ENCODE measurements at regions of chr1 and their contacts with region 1.

Region 1: DNA sequence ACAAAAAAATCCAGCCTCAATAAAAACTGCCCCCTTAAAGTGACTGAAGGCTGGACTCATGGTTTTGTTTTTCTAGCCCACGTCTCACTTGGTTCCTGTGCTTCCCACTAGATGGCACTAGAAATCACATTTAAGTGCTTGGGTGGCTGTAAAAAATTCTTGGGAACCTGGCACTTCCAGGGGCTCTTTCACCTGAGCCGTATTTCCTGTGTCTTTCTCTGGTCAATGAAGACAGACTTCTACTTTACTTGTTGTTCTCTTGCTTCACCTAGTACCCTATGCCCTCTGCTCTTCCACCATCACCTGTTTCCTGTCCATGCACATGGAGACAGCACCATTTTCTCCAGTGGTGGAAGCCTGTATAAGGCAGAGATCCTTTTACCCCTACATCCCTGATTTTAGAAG is 20.0 kb downstream of the METTL13 start:
- DNase-seq: peak; percentile 14
- ATAC-seq: peak; percentile 55
- H3K4me3 Mint-ChIP-seq: no peak overlapping the region
- H3K27ac Mint-ChIP-seq: no peak overlapping the region
- H3K4me1 Mint-ChIP-seq: peaks cover 4% of the 10 kb centered on the region
- H3K27me3 Mint-ChIP-seq: no peaks in the 10 kb centered on the region
- CTCF ChIP-seq: peak; percentile 68

Region 2: DNA sequence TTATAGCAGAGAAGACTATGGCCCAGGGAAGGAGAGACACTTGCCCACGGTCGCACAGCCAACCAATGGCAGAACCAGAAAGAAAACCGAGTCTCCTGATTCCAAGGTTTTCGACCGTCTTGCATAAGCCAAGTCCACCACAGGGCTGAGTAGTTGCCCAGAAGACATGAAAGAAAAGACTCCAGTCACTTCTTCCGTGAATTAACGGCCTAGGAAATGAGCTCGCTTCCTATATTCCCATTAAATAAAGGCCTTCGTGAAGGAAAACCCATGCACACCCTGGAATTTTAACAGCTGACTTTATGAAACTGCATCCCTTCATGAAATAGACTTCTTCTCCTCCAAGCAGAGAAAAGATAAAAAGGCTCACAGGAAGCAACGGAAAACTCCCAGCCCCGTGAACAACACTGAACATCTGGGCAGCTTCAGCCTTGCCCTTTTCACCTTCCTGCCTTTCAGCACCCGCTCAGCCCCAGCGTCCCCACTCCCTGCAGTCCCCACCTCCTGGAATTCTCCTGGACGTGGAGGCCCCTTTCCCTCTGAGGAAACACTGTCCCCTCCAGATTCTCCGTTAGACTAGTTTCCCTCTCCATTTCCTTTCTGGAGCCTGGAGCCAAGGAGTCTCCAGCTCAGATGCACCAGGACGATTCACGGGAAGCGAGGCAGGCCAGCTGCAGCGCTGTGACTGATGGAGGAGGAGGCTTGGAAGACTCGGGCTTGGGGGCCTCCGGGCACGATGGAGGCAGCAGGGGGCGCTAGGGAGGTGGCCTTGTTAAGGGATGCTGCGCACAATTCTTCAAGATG is 146.3 kb before region 1 on chr1:
- CTCF ChIA-PET with region 1: interaction called, 18 read pairs
- POLR2A ChIA-PET with region 1: no interaction called
- intact Hi-C with region 1: no loop called
- DNase-seq: peak; percentile 90
- ATAC-seq: peak; percentile 89
- H3K4me3 Mint-ChIP-seq: no peak overlapping the region
- H3K27ac Mint-ChIP-seq: no peak overlapping the region
- H3K4me1 Mint-ChIP-seq: peaks cover 9% of the 10 kb centered on the region
- H3K27me3 Mint-ChIP-seq: peaks cover 11% of the 10 kb centered on the region
- CTCF ChIP-seq: peak; percentile 83

Region 3: GRCh38 chr1:171817511-171818265 is 16.2 kb after region 1 on chr1:
- CTCF ChIA-PET with region 1: interaction called, 42 read pairs
- POLR2A ChIA-PET with region 1: interaction called, 4 read pairs
- intact Hi-C with region 1: no loop called
- DNase-seq: peak; percentile 70
- ATAC-seq: peak; percentile 99
- H3K4me3 Mint-ChIP-seq: no peak overlapping the region
- H3K27ac Mint-ChIP-seq: peak overlapping the region; percentile 52
- H3K4me1 Mint-ChIP-seq: peaks cover 17% of the 10 kb centered on the region
- H3K27me3 Mint-ChIP-seq: no peaks in the 10 kb centered on the region
- CTCF ChIP-seq: no peak

Region 4: GRCh38 chr1:171898941-171899340 is 97.5 kb after region 1 on chr1:
- CTCF ChIA-PET with region 1: no interaction called
- POLR2A ChIA-PET with region 1: no interaction called
- intact Hi-C with region 1: no loop called
- DNase-seq: no peak
- ATAC-seq: no peak
- H3K4me3 Mint-ChIP-seq: no peak overlapping the region
- H3K27ac Mint-ChIP-seq: no peak overlapping the region
- H3K4me1 Mint-ChIP-seq: peaks cover 2% of the 10 kb centered on the region
- H3K27me3 Mint-ChIP-seq: peaks cover 2% of the 10 kb centered on the region
- CTCF ChIP-seq: no peak

Region 5: DNA sequence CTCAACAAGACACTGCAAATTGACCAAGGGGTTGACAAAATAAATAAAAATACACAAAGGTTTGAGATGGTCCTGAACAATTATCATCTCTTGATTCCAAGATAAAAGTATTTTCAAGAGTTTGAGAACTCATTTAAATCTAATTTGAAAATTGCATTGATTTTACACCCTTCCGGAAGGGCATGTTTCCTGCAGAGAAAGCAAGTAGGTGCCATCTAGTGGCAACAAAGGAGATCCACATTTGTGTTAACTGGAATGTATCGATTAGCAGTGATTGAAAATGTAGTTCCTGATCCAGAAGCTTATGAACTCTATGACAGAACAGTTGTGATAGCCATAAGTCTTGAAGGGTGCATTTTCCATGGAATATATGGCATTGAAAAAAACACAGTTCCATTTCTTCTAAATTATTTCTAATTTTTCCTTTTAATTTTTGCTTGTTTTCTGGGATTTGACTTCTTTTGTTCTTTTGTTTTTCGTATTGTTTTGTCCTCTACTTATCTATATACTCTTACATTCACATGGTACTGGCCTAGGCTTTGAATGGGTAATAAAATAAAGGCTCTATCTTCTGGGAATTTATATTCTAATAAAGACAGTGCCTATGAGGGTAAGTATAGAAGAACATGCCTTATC is 183.5 kb after region 1 on chr1:
- CTCF ChIA-PET with region 1: interaction called, 137 read pairs
- POLR2A ChIA-PET with region 1: no interaction called
- intact Hi-C with region 1: loop called (anchors 2 kb)
- DNase-seq: no peak
- ATAC-seq: no peak
- H3K4me3 Mint-ChIP-seq: no peak overlapping the region
- H3K27ac Mint-ChIP-seq: no peak overlapping the region
- H3K4me1 Mint-ChIP-seq: no peaks in the 10 kb centered on the region
- H3K27me3 Mint-ChIP-seq: peaks cover 1% of the 10 kb centered on the region
- CTCF ChIP-seq: peak; percentile 81

Measured in activated CD8-positive, alpha-beta T cell treated with anti-CD3 and anti-CD28 coated beads for 36 hours (primary cell).